ENCODE measurements at regions of chr4 and their contacts with region 1.

Region 1: GRCh38 chr4:17810260-17811077 is at the starts of genes DCAF16 and NCAPG:
- DNase-seq: peak; percentile 99
- ATAC-seq: peak; percentile 90
- H3K4me3 Mint-ChIP-seq: peak within 1 kb of the TSS; percentile 92
- H3K27ac Mint-ChIP-seq: peak within 1 kb of the TSS; percentile 100
- H3K4me1 Mint-ChIP-seq: peaks cover 51% of the 10 kb centered on the region
- H3K27me3 Mint-ChIP-seq: no peaks in the 10 kb centered on the region
- total RNA-seq, gene DCAF16: 35.8 to 39.2 TPM
- total RNA-seq, gene NCAPG: 92.5 to 93.5 TPM

Region 2: DNA sequence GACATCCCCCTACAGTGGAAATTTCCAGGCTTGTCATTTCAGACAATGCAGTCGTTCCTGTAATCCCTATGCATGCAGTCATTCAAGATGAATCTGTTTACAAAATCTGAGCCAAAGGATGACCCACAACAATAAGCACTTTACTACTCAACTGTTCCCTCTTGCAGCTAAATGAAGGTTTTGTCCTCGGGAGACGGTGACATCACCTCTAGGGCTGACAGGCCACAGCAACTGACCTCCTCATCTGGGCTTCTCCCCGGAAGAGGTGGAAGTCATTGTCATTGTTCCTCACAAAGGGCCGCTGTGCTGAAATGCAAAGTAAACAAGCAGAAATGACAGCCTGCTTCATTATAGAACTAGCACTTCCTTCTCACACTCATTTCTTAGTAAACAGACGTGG is 266.3 kb before region 1 on chr4:
- CTCF ChIA-PET with region 1: interaction called, 46 read pairs
- POLR2A ChIA-PET with region 1: interaction called, 13 read pairs
- DNase-seq: no peak
- ATAC-seq: no peak
- H3K4me3 Mint-ChIP-seq: no peak overlapping the region
- H3K27ac Mint-ChIP-seq: no peak overlapping the region
- H3K4me1 Mint-ChIP-seq: peaks cover 6% of the 10 kb centered on the region
- H3K27me3 Mint-ChIP-seq: peaks cover 23% of the 10 kb centered on the region

Region 3: GRCh38 chr4:17576932-17577665 is 233.4 kb before region 1 on chr4 and contains the start of gene LAP3:
- CTCF ChIA-PET with region 1: interaction called, 4 read pairs
- POLR2A ChIA-PET with region 1: interaction called, 46 read pairs
- DNase-seq: peak; percentile 99
- ATAC-seq: peak; percentile 88
- H3K4me3 Mint-ChIP-seq: peak within 1 kb of the TSS; percentile 95
- H3K27ac Mint-ChIP-seq: peak within 1 kb of the TSS; percentile 99
- H3K4me1 Mint-ChIP-seq: peaks cover 43% of the 10 kb centered on the region
- H3K27me3 Mint-ChIP-seq: no peaks in the 10 kb centered on the region
- total RNA-seq, gene LAP3: 147 to 154 TPM

Region 4: GRCh38 chr4:17797808-17798207 is 12.7 kb before region 1 on chr4:
- CTCF ChIA-PET with region 1: interaction called, 18 read pairs
- POLR2A ChIA-PET with region 1: interaction called, 19 read pairs
- DNase-seq: no peak
- ATAC-seq: no peak
- H3K4me3 Mint-ChIP-seq: no peak overlapping the region
- H3K27ac Mint-ChIP-seq: no peak overlapping the region
- H3K4me1 Mint-ChIP-seq: peaks cover 2% of the 10 kb centered on the region
- H3K27me3 Mint-ChIP-seq: no peaks in the 10 kb centered on the region

Region 5: GRCh38 chr4:17889692-17890091 is 79.2 kb after region 1 on chr4:
- CTCF ChIA-PET with region 1: no interaction called
- POLR2A ChIA-PET with region 1: no interaction called
- DNase-seq: no peak
- ATAC-seq: no peak
- H3K4me3 Mint-ChIP-seq: no peak overlapping the region
- H3K27ac Mint-ChIP-seq: no peak overlapping the region
- H3K4me1 Mint-ChIP-seq: no peaks in the 10 kb centered on the region
- H3K27me3 Mint-ChIP-seq: no peaks in the 10 kb centered on the region

Measured in activated CD8-positive, alpha-beta T cell treated with anti-CD3 and anti-CD28 coated beads, Interleukin-2, amount 10 ng/mL, durations not matched to agents 7 days and 5 days (primary cell).